OCI-LY7 (cell line): ENCODE measurements at regions of chr7 and their contacts with region 1.

Region 1: GRCh38 chr7:24877790-24878311 is 102.1 kb downstream of the OSBPL3 start:
- DNase-seq: peak; percentile 94
- H3K4me3 ChIP-seq: peak overlapping the region; percentile 51
- H3K27ac ChIP-seq: peak overlapping the region; percentile 93
- H3K4me1 ChIP-seq: peaks cover 98% of the 10 kb centered on the region
- CTCF ChIP-seq: no peak

Region 2: DNA sequence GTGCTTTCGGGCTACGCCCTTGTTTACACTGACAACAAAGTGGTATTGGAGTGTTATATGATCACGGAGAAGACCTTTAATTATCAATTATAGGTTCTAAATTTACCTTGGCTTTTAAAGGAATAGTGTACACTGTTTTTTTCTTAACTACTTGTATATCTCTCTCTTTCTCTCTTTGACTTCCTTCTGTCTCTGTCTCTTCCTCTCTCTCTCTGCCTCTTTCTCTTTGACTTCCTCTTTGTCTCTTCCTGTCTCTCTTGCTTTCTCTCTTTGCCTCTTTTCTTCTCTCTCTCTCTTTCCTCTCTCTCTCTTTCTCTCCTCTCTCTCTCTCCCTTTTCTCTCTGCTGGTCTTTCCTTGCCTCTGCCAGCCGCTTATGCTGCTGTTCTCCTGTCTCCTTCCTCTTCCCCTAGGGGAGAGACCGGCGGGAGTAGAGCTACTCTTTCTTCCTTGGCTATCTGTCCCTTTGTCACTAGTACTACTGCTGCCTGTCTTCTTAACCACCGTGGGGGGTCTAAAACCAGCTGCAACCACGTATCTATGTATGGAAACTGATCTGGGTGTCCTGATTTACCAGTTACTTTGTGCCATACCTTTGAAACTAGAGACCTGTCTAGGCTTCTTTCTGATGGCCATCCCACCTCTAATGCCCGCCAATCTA is 83.7 kb before region 1 on chr7:
- CTCF ChIA-PET with region 1: no interaction called
- POLR2A ChIA-PET with region 1: no interaction called
- intact Hi-C with region 1: no loop called
- DNase-seq: peak; percentile 39
- H3K4me3 ChIP-seq: peak overlapping the region; percentile 7
- H3K27ac ChIP-seq: peak overlapping the region; percentile 13
- H3K4me1 ChIP-seq: peaks cover 19% of the 10 kb centered on the region
- CTCF ChIP-seq: no peak

Region 3: DNA sequence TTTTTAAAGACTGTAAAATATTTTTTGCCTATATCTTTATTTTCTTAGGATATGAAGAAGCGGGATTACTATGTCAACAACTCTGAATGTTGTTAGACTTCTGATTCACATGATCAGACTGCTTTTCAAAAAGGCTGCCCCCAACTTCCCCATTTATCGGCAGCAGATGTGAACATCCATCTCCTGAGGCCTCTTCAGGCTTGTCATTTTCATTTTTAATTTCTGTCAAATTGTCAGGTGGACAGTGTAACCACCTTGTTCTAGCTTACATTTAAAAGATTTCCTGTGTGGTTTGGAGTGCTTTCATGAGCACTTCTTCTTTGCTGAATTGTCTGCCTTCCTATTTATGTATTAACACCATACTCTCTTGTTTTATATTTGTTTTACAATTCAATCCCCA is 41.8 kb before region 1 on chr7:
- CTCF ChIA-PET with region 1: no interaction called
- POLR2A ChIA-PET with region 1: interaction called, 32 read pairs
- intact Hi-C with region 1: no loop called
- DNase-seq: peak; percentile 93
- H3K4me3 ChIP-seq: peak overlapping the region; percentile 34
- H3K27ac ChIP-seq: peak overlapping the region; percentile 95
- H3K4me1 ChIP-seq: peaks cover 89% of the 10 kb centered on the region
- CTCF ChIP-seq: no peak

Region 4: GRCh38 chr7:24842449-24843241 is 35.2 kb before region 1 on chr7:
- CTCF ChIA-PET with region 1: no interaction called
- POLR2A ChIA-PET with region 1: interaction called, 32 read pairs
- intact Hi-C with region 1: loop called (anchors 2 kb)
- DNase-seq: peak; percentile 71
- H3K4me3 ChIP-seq: peak overlapping the region; percentile 65
- H3K27ac ChIP-seq: peak overlapping the region; percentile 92
- H3K4me1 ChIP-seq: peaks cover 96% of the 10 kb centered on the region
- CTCF ChIP-seq: 0 out of 2 replicates have a peak, but pooled peaks have one; percentile 23

Region 5: DNA sequence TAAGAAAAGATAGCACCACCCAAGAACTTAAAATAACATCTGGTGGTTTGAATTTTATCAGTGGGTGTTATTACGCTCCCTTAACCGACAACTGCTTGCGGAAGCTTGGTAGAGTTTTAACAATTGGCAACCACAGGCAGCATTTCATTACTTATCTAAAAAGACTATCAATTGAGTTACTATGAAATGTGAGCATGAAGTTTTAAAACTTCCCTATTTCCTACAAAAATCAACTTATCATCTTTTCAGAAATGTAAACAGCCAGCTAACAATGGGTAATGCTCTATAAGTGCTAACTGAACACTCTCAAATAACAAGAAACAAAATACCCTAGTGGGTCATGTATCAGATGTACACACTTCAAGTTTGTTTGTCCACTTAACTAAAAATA is 33.4 kb after region 1 on chr7:
- CTCF ChIA-PET with region 1: no interaction called
- POLR2A ChIA-PET with region 1: interaction called, 21 read pairs
- intact Hi-C with region 1: no loop called
- DNase-seq: peak; percentile 61
- H3K4me3 ChIP-seq: peak overlapping the region; percentile 29
- H3K27ac ChIP-seq: peak overlapping the region; percentile 72
- H3K4me1 ChIP-seq: peaks cover 96% of the 10 kb centered on the region
- CTCF ChIP-seq: no peak

Region 6: GRCh38 chr7:24948739-24949138 is 70.9 kb after region 1 on chr7:
- CTCF ChIA-PET with region 1: no interaction called
- POLR2A ChIA-PET with region 1: interaction called, 10 read pairs
- intact Hi-C with region 1: no loop called
- DNase-seq: no peak
- H3K4me3 ChIP-seq: no peak overlapping the region
- H3K27ac ChIP-seq: no peak overlapping the region
- H3K4me1 ChIP-seq: peaks cover 36% of the 10 kb centered on the region
- CTCF ChIP-seq: no peak

Region 7: GRCh38 chr7:25069900-25070443 is 192.1 kb after region 1 on chr7:
- CTCF ChIA-PET with region 1: no interaction called
- POLR2A ChIA-PET with region 1: interaction called, 4 read pairs
- intact Hi-C with region 1: loop called (anchors 5 kb)
- DNase-seq: peak; percentile 85
- H3K4me3 ChIP-seq: no peak overlapping the region
- H3K27ac ChIP-seq: no peak overlapping the region
- H3K4me1 ChIP-seq: peaks cover 32% of the 10 kb centered on the region
- CTCF ChIP-seq: peak; percentile 93

Region 8: GRCh38 chr7:25087855-25088254 is 210.0 kb after region 1 on chr7:
- CTCF ChIA-PET with region 1: no interaction called
- POLR2A ChIA-PET with region 1: no interaction called
- intact Hi-C with region 1: no loop called
- DNase-seq: peak; percentile 72
- H3K4me3 ChIP-seq: no peak overlapping the region
- H3K27ac ChIP-seq: no peak overlapping the region
- H3K4me1 ChIP-seq: peaks cover 42% of the 10 kb centered on the region
- CTCF ChIP-seq: no peak